CD4-positive, alpha-beta T cell (primary cell): ENCODE measurements at regions of chr17 and their contacts with region 1.

Region 1: DNA sequence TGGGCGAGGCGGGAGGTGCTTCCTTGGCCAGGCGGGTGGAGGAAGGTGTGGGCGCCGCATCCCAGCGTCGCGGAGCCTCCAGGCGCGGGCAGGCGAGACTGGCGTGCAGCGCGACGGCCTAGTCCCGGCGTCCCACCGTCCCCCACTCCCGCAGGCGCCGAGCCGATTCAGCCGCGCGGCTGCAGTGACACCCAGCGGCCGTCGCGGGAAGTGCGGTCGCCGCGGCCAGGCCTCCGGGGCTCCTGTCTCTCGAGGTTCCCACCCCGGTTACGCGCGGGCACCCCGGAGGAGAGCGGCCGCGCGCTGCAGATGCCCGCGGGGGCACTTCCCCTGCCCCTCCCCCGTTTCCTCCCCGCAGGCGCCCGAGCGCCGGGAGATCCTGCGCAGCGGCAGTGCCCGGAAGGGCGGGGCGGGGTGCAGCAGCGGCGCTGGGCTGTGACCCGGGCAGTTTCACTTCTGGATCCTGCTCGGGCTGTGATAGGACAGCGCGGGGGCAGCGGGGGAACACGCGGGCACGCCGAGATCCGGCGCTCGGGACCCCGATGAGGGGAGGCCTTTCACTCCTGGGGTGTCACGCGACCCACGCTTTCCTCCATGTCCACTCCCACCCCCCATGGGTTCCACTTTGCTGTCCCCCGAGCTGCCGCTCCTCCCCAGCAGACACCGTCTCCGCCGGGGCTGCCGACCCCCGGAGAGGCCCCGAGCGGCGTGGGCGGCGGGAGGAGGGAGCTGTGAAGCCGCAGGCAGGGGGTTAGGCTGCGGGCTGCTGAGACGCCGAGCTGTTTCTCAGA is 16.6 kb downstream of the GRB7 start:
- DNase-seq: peak; percentile 92 to 99 (median 97)
- ATAC-seq: peak; percentile 72
- H3K4me3 ChIP-seq: peak overlapping the region; percentile 71
- H3K4me3 Mint-ChIP-seq: peak overlapping the region; percentile 87
- H3K27ac ChIP-seq: peak overlapping the region; percentile 95 to 97
- H3K27ac Mint-ChIP-seq: peak overlapping the region; percentile 92
- H3K4me1 ChIP-seq: peaks cover 59% of the 10 kb centered on the region
- H3K4me1 Mint-ChIP-seq: peaks cover 56% of the 10 kb centered on the region
- H3K27me3 ChIP-seq: no peaks in the 10 kb centered on the region
- H3K27me3 Mint-ChIP-seq: no peaks in the 10 kb centered on the region
- CTCF ChIP-seq: peak; percentile 89

Region 2: DNA sequence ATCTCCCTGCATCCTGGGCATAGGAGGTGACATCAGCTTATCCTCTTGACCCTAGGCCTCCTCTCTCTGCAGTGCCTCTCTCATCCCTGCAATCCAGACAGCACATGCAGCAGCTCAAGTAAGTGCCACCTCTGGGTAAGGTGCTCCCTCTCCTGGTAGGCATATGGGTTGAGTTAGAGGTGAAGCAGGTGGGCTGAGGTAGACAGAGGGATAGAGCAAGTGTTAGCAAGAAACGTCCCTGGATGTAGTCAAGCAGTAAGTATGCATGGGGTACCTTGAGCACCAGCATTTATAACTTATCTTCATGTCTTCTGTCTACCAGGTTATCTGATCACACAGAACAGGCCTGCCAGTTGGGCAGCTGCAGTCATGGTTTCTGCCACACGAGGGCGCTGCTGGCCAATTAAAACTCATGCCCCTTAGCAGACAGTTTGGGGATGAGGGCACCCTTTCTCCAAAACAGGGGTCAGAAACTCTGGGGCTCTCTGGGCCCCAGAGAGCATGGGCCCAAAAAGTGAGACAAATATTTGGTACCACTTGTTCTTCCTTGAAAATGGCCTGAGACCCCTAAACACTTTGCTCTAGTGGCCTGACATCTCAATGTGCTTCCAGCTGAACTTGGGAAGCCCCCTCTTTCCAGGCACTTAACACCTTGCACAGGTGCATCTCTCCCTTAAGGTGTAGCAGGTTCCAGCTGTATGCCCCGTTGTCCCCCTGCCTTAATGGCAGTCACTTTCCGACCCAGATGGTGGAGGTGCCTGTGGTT is 206.5 kb before region 1 on chr17:
- CTCF ChIA-PET with region 1: no interaction called
- POLR2A ChIA-PET with region 1: no interaction called
- intact Hi-C with region 1: loop called (anchors 1 to 2 kb)
- DNase-seq: peak; percentile 56 to 85 (median 74)
- ATAC-seq: peak; percentile 85
- H3K4me3 ChIP-seq: no peak overlapping the region
- H3K4me3 Mint-ChIP-seq: no peak overlapping the region
- H3K27ac ChIP-seq: no peak overlapping the region
- H3K27ac Mint-ChIP-seq: no peak overlapping the region
- H3K4me1 ChIP-seq: no peaks in the 10 kb centered on the region
- H3K4me1 Mint-ChIP-seq: no peaks in the 10 kb centered on the region
- H3K27me3 ChIP-seq: no peaks in the 10 kb centered on the region
- H3K27me3 Mint-ChIP-seq: no peaks in the 10 kb centered on the region
- CTCF ChIP-seq: peak; percentile 96

Region 3: DNA sequence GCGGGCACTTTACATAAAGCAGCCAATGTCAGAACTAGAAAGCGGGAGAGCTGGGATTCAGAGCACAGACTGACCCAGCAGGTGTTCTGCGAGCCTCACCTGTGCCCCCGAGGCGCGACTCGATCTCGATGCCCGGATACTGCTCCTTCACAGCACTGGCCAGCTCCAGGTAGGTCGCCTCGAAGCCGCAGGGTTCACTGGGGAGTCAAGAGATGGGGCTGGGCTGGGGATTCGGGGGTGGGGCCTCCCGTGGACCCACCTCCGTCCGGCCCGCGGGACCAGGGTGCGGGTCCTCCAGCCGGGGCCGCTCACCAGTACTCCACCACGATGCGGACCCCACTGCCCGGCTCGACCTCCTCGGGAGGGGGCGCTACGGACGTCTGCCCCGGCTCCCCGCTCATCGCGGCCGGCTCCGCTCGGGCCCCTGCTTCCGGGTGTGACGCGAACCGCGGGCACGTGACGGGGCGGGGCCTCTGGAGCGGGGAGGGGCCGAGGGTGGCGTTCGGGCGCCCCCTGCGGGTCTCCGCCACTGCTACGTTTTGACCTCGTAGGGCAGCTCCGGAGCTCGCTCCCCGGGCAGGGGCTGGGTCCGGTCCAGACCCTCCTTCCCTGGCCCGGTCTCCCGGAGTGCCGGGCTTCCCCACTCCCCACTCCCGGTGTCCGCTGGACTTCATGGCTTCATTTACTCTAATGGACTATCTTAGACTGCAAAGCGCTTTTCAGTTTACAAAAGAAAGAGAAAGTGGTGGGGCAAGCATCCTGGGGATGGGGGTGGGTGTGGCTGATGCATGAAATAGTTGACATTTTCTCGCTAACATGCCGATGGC is 24.0 kb before region 1 on chr17 and contains the start of gene MIEN1:
- CTCF ChIA-PET with region 1: interaction called, 43 read pairs
- POLR2A ChIA-PET with region 1: interaction called, 26 read pairs
- intact Hi-C with region 1: loop called in 1 of 2 experiments (anchors 1 kb)
- DNase-seq: peak; percentile 86 to 98 (median 94)
- ATAC-seq: peak; percentile 91
- H3K4me3 ChIP-seq: peak within 1 kb of the TSS; percentile 79
- H3K4me3 Mint-ChIP-seq: peak within 1 kb of the TSS; percentile 91
- H3K27ac ChIP-seq: peak within 1 kb of the TSS; percentile 90 to 91
- H3K27ac Mint-ChIP-seq: peak within 1 kb of the TSS; percentile 88
- H3K4me1 ChIP-seq: peaks cover 23% of the 10 kb centered on the region
- H3K4me1 Mint-ChIP-seq: peaks cover 17% of the 10 kb centered on the region
- H3K27me3 ChIP-seq: no peaks in the 10 kb centered on the region
- H3K27me3 Mint-ChIP-seq: no peaks in the 10 kb centered on the region
- CTCF ChIP-seq: peak; percentile 91
- total RNA-seq, gene MIEN1: 31.5 to 32.3 TPM

Region 4: GRCh38 chr17:39794249-39794970 is 40.1 kb after region 1 on chr17:
- CTCF ChIA-PET with region 1: interaction called, 15 read pairs
- POLR2A ChIA-PET with region 1: interaction called, 30 read pairs
- intact Hi-C with region 1: loop called in 1 of 2 experiments (anchors 2 kb)
- DNase-seq: peak in 10 of 14 experiments; percentile 19 to 80 (median 36)
- ATAC-seq: peak; percentile 74
- H3K4me3 ChIP-seq: no peak overlapping the region
- H3K4me3 Mint-ChIP-seq: peak overlapping the region; percentile 79
- H3K27ac ChIP-seq: peak overlapping the region; percentile 53 to 79
- H3K27ac Mint-ChIP-seq: peak overlapping the region; percentile 84
- H3K4me1 ChIP-seq: peaks cover 65% of the 10 kb centered on the region
- H3K4me1 Mint-ChIP-seq: peaks cover 75% of the 10 kb centered on the region
- H3K27me3 ChIP-seq: no peaks in the 10 kb centered on the region
- H3K27me3 Mint-ChIP-seq: no peaks in the 10 kb centered on the region
- CTCF ChIP-seq: no peak

Region 5: GRCh38 chr17:39822051-39822451 is 67.7 kb after region 1 on chr17:
- CTCF ChIA-PET with region 1: interaction called, 9 read pairs
- POLR2A ChIA-PET with region 1: interaction called, 42 read pairs
- intact Hi-C with region 1: loop called in 1 of 2 experiments (anchors 1 kb)
- DNase-seq: peak in 2 of 14 experiments; percentile 33 to 55
- ATAC-seq: no peak
- H3K4me3 ChIP-seq: no peak overlapping the region
- H3K4me3 Mint-ChIP-seq: no peak overlapping the region
- H3K27ac ChIP-seq: peak overlapping the region in 1 of 2 donors; percentile 26
- H3K27ac Mint-ChIP-seq: peak overlapping the region; percentile 94
- H3K4me1 ChIP-seq: peaks cover 35% of the 10 kb centered on the region
- H3K4me1 Mint-ChIP-seq: peaks cover 58% of the 10 kb centered on the region
- H3K27me3 ChIP-seq: no peaks in the 10 kb centered on the region
- H3K27me3 Mint-ChIP-seq: no peaks in the 10 kb centered on the region
- CTCF ChIP-seq: no peak

Region 6: GRCh38 chr17:39980351-39981206 is 226.2 kb after region 1 on chr17 and contains the start of gene PSMD3:
- CTCF ChIA-PET with region 1: interaction called, 3 read pairs
- POLR2A ChIA-PET with region 1: interaction called, 9 read pairs
- intact Hi-C with region 1: loop called (anchors 2 to 5 kb)
- DNase-seq: peak; percentile 95 to 100 (median 98)
- ATAC-seq: peak; percentile 94
- H3K4me3 ChIP-seq: peak within 1 kb of the TSS; percentile 96
- H3K4me3 Mint-ChIP-seq: peak within 1 kb of the TSS; percentile 89
- H3K27ac ChIP-seq: peak within 1 kb of the TSS; percentile 89 to 97
- H3K27ac Mint-ChIP-seq: peak within 1 kb of the TSS; percentile 95
- H3K4me1 ChIP-seq: peaks cover 25% of the 10 kb centered on the region
- H3K4me1 Mint-ChIP-seq: peaks cover 39% of the 10 kb centered on the region
- H3K27me3 ChIP-seq: no peaks in the 10 kb centered on the region
- H3K27me3 Mint-ChIP-seq: no peaks in the 10 kb centered on the region
- CTCF ChIP-seq: peak; percentile 70
- total RNA-seq, gene PSMD3: 66.7 to 71.9 TPM